GM12878 (cell line): ENCODE measurements at regions of chr6 and their contacts with region 1.

Region 1: DNA sequence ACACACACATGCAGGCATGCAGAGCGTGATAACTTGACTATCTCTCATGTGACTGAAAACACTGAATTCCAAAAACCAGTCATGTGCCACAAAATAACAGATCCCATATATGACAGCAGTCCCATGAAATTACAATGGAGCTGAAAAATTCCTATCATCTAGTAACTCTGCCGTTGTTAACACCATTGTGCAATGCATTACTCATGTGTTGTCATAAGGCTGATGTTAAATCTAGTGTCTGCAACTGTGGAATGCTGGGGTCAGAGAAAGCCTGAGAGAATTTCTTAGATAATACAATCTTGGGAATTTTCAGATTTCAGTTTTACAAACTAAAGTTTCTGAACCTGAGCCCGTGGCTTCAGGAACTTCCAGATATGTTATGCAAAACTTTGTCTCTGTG is 70.2 kb downstream of the LYRM4 start:
- DNase-seq: no peak
- ATAC-seq: no peak
- H3K4me3 ChIP-seq: no peak overlapping the region
- H3K27ac ChIP-seq: no peak overlapping the region
- H3K4me1 ChIP-seq: peaks cover 23% of the 10 kb centered on the region
- H3K27me3 ChIP-seq: no peaks in the 10 kb centered on the region
- CTCF ChIP-seq: no peak
- EP300 ChIP-seq: no peak
- POLR2A ChIP-seq: no peak
- RAD21 ChIP-seq: no peak

Region 2: DNA sequence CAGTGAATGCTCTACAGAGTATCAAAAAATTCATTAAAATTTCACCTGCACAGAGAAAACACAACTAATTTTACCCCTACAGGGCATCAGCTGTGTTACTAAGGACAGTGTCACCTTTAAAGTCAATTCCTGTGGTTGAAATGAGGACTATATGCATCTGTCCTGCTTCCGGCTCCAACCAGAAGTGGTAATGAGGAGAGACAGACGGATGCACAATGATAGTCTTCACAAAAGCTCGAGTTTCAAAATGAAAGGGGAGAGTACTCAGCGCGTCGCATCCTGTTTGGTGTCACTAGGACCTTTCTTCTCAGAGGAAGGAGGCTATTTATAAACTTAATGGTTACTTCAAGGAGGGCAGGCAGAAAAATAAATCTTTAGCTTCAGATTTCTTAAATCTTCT is 16.3 kb before region 1 on chr6:
- CTCF ChIA-PET with region 1: interaction called, 3 read pairs
- POLR2A ChIA-PET with region 1: interaction called, 4 read pairs
- RAD21 ChIA-PET with region 1: interaction called, 3 read pairs
- SMC1A ChIA-PET with region 1: interaction called, 13 read pairs
- in situ Hi-C with region 1: no loop called
- intact Hi-C with region 1: no loop called
- DNase-seq: peak; percentile 87
- ATAC-seq: peak; percentile 99
- H3K4me3 ChIP-seq: no peak overlapping the region
- H3K27ac ChIP-seq: peak overlapping the region; percentile 93
- H3K4me1 ChIP-seq: peaks cover 29% of the 10 kb centered on the region
- H3K27me3 ChIP-seq: no peaks in the 10 kb centered on the region
- CTCF ChIP-seq: no peak
- EP300 ChIP-seq: no peak
- POLR2A ChIP-seq: peak; percentile 69
- RAD21 ChIP-seq: no peak